Activated CD4-positive, alpha-beta T cell treated with anti-CD3 and anti-CD28 coated beads for 36 hours (primary cell): ENCODE measurements at regions of chr2 and their contacts with region 1.

Region 1: DNA sequence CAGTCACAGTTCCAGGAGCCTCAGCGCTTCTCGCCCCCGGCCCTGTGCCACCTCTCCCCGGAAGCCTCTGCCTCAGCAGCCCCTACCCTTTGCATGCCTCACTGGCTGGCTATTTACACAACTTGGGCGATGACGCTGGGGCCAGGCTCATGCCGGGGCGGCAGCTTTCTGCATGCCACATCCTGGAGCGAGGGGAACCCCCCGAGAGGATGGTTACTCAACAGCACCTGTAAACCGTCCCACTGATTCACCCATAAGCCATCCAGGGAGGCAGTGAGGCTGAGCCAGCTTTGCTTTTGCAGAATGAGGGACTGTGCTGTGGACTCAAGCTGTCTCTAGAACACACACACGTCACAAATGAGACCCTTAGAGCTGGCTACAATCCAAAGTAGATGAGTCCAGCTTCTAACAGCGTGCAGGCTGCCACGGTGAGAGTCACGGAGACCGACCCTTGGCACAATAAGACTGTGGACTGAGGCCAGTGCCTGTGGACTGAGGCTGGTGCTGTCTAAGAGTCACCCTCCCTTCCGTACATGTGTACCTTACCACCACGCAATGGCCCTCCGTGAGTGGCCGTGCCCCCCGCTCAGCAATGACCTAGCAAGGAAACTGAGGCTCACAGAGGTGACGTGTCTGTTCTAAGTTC is 45.6 kb upstream of the ODC1 start:
- DNase-seq: peak; percentile 94
- ATAC-seq: peak; percentile 96
- H3K4me3 Mint-ChIP-seq: no peak overlapping the region
- H3K27ac Mint-ChIP-seq: peak overlapping the region; percentile 78
- H3K4me1 Mint-ChIP-seq: peaks cover 34% of the 10 kb centered on the region
- H3K27me3 Mint-ChIP-seq: peaks cover 2% of the 10 kb centered on the region

Region 2: GRCh38 chr2:10239561-10239967 is 254.2 kb before region 1 on chr2:
- CTCF ChIA-PET with region 1: no interaction called
- POLR2A ChIA-PET with region 1: no interaction called
- intact Hi-C with region 1: no loop called
- DNase-seq: no peak
- ATAC-seq: no peak
- H3K4me3 Mint-ChIP-seq: no peak overlapping the region
- H3K27ac Mint-ChIP-seq: no peak overlapping the region
- H3K4me1 Mint-ChIP-seq: no peaks in the 10 kb centered on the region
- H3K27me3 Mint-ChIP-seq: no peaks in the 10 kb centered on the region

Region 3: DNA sequence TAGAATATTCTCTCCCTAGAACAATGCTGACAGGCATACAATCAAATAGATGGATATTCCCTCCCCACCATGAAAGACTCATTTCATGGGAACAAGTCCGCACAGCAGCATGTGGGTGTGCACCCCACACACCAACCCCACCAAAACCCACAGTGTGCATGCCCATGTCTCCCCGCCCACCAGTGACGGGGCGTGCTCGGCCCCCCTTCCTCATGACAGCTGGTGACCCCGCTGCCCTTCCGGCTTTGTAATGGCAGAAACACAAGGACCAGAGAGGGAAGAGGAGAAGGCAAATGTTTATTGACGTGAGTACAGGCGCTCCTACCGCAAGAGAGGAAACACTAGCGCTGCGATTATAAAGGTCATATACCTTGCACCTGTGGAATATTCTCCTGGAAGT is 14.8 kb before region 1 on chr2:
- CTCF ChIA-PET with region 1: no interaction called
- POLR2A ChIA-PET with region 1: no interaction called
- intact Hi-C with region 1: no loop called
- DNase-seq: no peak
- ATAC-seq: no peak
- H3K4me3 Mint-ChIP-seq: no peak overlapping the region
- H3K27ac Mint-ChIP-seq: no peak overlapping the region
- H3K4me1 Mint-ChIP-seq: peaks cover 19% of the 10 kb centered on the region
- H3K27me3 Mint-ChIP-seq: no peaks in the 10 kb centered on the region

Region 4: GRCh38 chr2:10538224-10538894 is 44.6 kb after region 1 on chr2:
- CTCF ChIA-PET with region 1: no interaction called
- POLR2A ChIA-PET with region 1: no interaction called
- intact Hi-C with region 1: loop called (anchors 2 to 5 kb)
- DNase-seq: peak; percentile 34
- ATAC-seq: peak; percentile 87
- H3K4me3 Mint-ChIP-seq: no peak overlapping the region
- H3K27ac Mint-ChIP-seq: no peak overlapping the region
- H3K4me1 Mint-ChIP-seq: peaks cover 8% of the 10 kb centered on the region
- H3K27me3 Mint-ChIP-seq: peaks cover 4% of the 10 kb centered on the region

Region 5: GRCh38 chr2:10654069-10654468 is 160.3 kb after region 1 on chr2:
- CTCF ChIA-PET with region 1: interaction called, 3 read pairs
- POLR2A ChIA-PET with region 1: interaction called, 3 read pairs
- intact Hi-C with region 1: loop called in 1 of 2 experiments (anchors 1 kb)
- DNase-seq: peak; percentile 81
- ATAC-seq: peak; percentile 97
- H3K4me3 Mint-ChIP-seq: peak overlapping the region; percentile 9
- H3K27ac Mint-ChIP-seq: peak overlapping the region; percentile 89
- H3K4me1 Mint-ChIP-seq: peaks cover 47% of the 10 kb centered on the region
- H3K27me3 Mint-ChIP-seq: no peaks in the 10 kb centered on the region